Activated CD4-positive, alpha-beta T cell treated with anti-CD3 and anti-CD28 coated beads, Interleukin-2, amount 10 ng/mL, durations not matched to agents 7 days and 5 days (primary cell): ENCODE measurements at regions of chr3 and their contacts with region 1.

Region 1: DNA sequence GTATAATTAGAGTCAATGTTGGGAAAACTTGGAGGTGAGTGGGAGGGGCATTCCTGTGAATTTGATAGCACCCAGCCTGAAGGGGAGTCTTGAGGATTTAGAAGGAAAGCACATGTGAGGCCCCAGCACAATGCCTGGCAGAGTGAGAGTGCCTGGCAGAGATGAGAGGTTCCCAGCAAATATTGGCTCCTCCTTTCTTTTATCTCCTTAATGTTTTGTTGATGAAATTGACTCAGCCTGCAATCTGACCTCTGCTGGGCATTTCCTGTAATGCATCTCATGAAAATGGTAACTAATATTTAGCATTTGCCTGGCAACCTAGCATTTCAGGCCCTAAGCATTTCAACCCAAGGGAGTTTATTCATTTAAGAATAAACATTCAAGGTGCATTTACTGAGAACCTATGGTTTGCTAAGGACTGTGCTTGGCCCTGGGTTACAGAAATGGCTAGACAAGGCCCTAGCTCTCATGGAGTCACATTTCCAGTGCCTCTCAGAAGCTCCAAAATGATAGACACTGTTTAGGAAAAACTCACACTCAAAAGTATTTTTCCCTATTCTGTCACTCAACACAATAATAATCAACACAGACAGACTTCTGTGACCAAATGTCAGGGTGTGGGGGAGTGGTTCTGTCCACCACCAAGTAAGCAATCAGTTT is 19.0 kb downstream of the PDHB start:
- DNase-seq: peak; percentile 75
- H3K4me3 Mint-ChIP-seq: no peak overlapping the region
- H3K27ac Mint-ChIP-seq: no peak overlapping the region
- H3K4me1 Mint-ChIP-seq: peaks cover 6% of the 10 kb centered on the region
- H3K27me3 Mint-ChIP-seq: no peaks in the 10 kb centered on the region

Region 2: GRCh38 chr3:58299839-58300516 is 114.7 kb before region 1 on chr3:
- CTCF ChIA-PET with region 1: no interaction called
- POLR2A ChIA-PET with region 1: no interaction called
- DNase-seq: no peak
- H3K4me3 Mint-ChIP-seq: no peak overlapping the region
- H3K27ac Mint-ChIP-seq: no peak overlapping the region
- H3K4me1 Mint-ChIP-seq: peaks cover under 1% of the 10 kb centered on the region
- H3K27me3 Mint-ChIP-seq: peaks cover 32% of the 10 kb centered on the region

Region 3: DNA sequence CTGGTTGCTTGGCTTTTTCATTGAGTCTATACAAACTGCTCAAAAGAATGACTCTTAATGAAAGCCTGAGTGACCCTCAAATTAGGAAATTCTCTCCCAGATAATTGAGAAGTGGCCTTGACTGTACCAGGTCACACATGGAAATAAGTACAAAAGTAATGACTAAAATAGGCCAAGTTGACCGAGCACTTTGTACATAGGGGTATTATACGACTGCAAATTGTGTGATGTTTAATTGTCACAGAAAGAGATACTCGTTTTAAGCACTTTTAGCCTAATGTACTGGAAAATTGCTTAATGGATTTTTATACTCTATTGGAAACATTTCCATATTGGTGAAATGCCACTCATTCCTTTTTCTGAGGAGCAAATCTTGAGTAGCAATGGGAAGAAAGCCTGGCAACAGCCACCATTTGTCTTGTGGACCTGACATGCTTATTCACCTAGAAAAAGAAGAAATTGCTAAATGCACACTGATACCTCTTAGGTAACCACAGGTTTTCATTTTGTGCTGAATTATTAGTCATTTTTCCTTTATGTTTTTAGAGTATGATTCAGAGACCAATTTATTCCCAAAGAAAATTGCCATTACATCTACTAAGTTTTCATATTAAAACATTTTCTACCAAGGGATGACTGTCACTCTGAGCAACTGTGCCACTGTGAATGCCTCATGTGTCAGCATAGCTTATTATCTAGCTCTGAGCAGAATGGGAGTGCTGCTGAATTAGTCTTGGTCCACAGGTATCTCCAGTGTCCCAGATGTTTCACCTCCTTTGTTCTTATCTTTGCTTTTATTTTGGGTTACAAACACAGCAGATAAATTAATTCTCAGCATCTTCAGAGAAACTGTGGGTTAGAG is 90.9 kb before region 1 on chr3:
- CTCF ChIA-PET with region 1: interaction called, 11 read pairs
- POLR2A ChIA-PET with region 1: no interaction called
- DNase-seq: no peak
- H3K4me3 Mint-ChIP-seq: no peak overlapping the region
- H3K27ac Mint-ChIP-seq: peak overlapping the region; percentile 69
- H3K4me1 Mint-ChIP-seq: peaks cover 27% of the 10 kb centered on the region
- H3K27me3 Mint-ChIP-seq: no peaks in the 10 kb centered on the region